Endothelial cell of umbilical vein (primary cell): ENCODE measurements at regions of chr11 and their contacts with region 1.

Region 1: DNA sequence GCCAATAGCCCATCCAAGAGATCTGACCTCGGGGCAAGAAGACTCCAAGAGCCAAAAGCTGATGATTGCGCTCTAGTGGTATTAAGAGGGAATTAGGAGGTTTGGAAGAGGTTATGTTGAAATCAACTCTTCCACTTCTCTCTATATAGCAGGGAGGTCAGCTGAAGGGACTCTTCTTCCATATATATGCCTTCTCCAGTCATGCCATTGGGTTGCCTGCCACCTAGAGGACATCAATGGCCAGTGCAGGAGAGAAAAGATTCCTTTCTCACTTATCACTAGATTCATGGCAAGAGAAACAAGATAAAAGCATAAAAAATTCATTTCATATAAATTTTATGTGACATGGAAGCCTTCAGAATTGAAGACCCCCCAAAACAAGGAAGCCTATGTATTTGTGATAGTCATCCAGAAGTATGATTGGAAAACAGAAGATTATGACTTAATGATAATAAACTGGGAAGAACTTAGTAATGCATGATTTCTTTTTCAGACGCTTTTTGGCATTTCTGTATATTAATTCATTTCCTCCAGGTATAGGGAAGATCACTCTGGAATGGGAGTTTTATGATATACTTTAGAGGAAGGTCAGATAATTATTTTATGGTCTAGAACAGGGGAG is 435.1 kb upstream of the DDI1 start:
- DNase-seq: peak; percentile 78
- H3K4me3 ChIP-seq: no peak overlapping the region
- H3K27ac ChIP-seq: peak overlapping the region; percentile 58
- H3K4me1 ChIP-seq: peaks cover 12% of the 10 kb centered on the region
- H3K27me3 ChIP-seq: no peaks in the 10 kb centered on the region
- CTCF ChIP-seq: peak; percentile 80 to 89
- POLR2A ChIP-seq: no peak

Region 2: GRCh38 chr11:102831489-102832440 is 769.6 kb before region 1 on chr11:
- CTCF ChIA-PET with region 1: no interaction called
- POLR2A ChIA-PET with region 1: no interaction called
- dilution Hi-C with region 1: no loop called
- intact Hi-C with region 1: loop called (anchors 1 kb)
- DNase-seq: peak; percentile 63
- H3K4me3 ChIP-seq: peak overlapping the region in 2 of 3 experiments; percentile 15 to 40
- H3K27ac ChIP-seq: no peak overlapping the region
- H3K4me1 ChIP-seq: no peaks in the 10 kb centered on the region
- H3K27me3 ChIP-seq: peaks cover 5 to 13% of the 10 kb centered on the region in 2 experiments
- CTCF ChIP-seq: peak; percentile 62 to 71
- POLR2A ChIP-seq: no peak

Region 3: DNA sequence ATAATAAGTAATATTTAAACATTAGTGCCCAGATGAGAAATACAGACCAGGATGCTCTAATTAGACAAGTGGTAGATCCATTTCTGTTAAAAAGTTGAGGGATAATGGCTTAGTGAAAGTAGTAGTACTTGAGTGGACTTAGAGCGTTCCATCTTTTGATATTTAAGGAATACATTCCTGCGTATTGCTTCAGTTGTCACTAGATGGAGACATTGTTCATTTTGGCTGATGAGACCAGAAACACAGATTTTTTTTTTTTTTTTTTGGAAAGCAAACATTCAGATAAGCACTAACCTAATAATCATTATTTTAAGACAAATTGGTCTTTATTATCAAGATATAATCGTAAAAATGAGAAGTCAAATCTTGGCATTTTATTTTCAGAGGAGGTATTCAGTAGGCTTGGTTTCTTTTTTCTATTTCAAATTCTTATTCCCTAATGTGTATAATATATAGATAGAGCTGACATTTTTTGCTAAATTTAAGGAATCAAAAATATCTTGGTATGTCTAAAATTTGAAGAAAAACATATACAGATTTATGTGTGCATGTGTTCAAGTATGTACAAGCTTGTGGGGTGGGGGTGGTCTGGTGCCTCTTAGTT is 399.2 kb before region 1 on chr11:
- CTCF ChIA-PET with region 1: interaction called, 16 read pairs
- POLR2A ChIA-PET with region 1: no interaction called
- dilution Hi-C with region 1: no loop called
- intact Hi-C with region 1: loop called (anchors 1 kb)
- DNase-seq: peak; percentile 56
- H3K4me3 ChIP-seq: no peak overlapping the region
- H3K27ac ChIP-seq: no peak overlapping the region
- H3K4me1 ChIP-seq: no peaks in the 10 kb centered on the region
- H3K27me3 ChIP-seq: no peaks in the 10 kb centered on the region
- CTCF ChIP-seq: peak; percentile 42 to 50
- POLR2A ChIP-seq: no peak

Region 4: GRCh38 chr11:103326070-103326794 is 275.1 kb before region 1 on chr11:
- CTCF ChIA-PET with region 1: interaction called, 35 read pairs
- POLR2A ChIA-PET with region 1: no interaction called
- dilution Hi-C with region 1: no loop called
- intact Hi-C with region 1: loop called (anchors 1 kb)
- DNase-seq: peak; percentile 77
- H3K4me3 ChIP-seq: no peak overlapping the region
- H3K27ac ChIP-seq: no peak overlapping the region
- H3K4me1 ChIP-seq: peaks cover 8% of the 10 kb centered on the region
- H3K27me3 ChIP-seq: no peaks in the 10 kb centered on the region
- CTCF ChIP-seq: peak; percentile 67 to 74
- POLR2A ChIP-seq: no peak

Region 5: DNA sequence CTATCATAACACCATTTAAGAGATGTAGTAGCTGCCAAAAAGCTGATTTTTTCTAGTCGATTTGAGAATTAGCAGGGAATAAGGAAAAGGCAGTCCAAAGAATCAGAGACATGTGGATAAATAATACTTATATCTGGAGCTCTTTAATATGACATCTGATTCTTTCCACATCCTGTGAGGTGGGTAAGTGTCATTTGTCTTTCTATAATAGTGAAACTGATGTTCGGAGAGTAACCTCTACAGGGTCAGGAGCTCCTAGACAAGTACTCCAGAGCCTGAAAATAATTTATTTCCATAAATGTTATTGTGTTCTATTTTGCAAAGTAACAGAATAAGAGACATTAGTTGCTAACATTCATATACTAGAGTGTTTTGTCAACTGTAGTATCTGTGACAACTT is 124.5 kb before region 1 on chr11:
- CTCF ChIA-PET with region 1: interaction called, 5 read pairs
- POLR2A ChIA-PET with region 1: no interaction called
- dilution Hi-C with region 1: no loop called
- intact Hi-C with region 1: loop called (anchors 5 kb)
- DNase-seq: no peak
- H3K4me3 ChIP-seq: no peak overlapping the region
- H3K27ac ChIP-seq: no peak overlapping the region
- H3K4me1 ChIP-seq: no peaks in the 10 kb centered on the region
- H3K27me3 ChIP-seq: no peaks in the 10 kb centered on the region
- CTCF ChIP-seq: no peak
- POLR2A ChIP-seq: no peak

Region 6: DNA sequence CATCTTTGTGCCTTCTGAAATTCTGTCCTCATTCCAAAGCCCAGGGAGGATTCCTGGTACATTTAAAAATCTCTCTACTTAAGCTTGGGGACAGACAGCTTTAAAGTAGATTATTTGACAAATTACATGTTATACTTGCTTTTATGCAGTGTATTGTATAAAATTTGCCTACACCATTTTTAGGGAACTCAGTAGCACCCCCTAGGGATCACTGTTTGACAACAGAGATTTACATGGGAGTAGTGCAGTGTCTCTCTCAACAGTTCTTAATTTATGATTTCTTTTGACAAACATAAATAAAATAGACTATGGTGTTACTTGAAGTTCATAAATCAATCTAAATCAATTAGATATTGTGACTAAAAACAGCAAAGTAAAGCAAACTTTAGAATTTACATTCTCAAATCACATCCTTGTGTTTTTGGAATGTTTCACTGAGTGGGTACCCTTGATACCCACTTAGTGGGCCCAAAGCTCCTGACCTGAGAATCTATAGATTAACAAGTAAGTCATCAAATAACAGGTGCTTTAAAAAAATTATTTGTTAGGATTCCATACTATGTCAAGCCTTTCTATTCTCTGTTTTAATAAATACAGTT is 63.3 kb before region 1 on chr11:
- CTCF ChIA-PET with region 1: interaction called, 23 read pairs
- POLR2A ChIA-PET with region 1: no interaction called
- dilution Hi-C with region 1: no loop called
- intact Hi-C with region 1: loop called (anchors 2 kb)
- DNase-seq: peak; percentile 54
- H3K4me3 ChIP-seq: no peak overlapping the region
- H3K27ac ChIP-seq: no peak overlapping the region
- H3K4me1 ChIP-seq: peaks cover 4% of the 10 kb centered on the region
- H3K27me3 ChIP-seq: no peaks in the 10 kb centered on the region
- CTCF ChIP-seq: peak; percentile 45 to 46
- POLR2A ChIP-seq: no peak

Region 7: GRCh38 chr11:103659206-103659618 is 57.9 kb after region 1 on chr11:
- CTCF ChIA-PET with region 1: interaction called, 3 read pairs
- POLR2A ChIA-PET with region 1: no interaction called
- dilution Hi-C with region 1: no loop called
- intact Hi-C with region 1: loop called (anchors 1 kb)
- DNase-seq: peak; percentile 37
- H3K4me3 ChIP-seq: no peak overlapping the region
- H3K27ac ChIP-seq: no peak overlapping the region
- H3K4me1 ChIP-seq: peaks cover 5% of the 10 kb centered on the region
- H3K27me3 ChIP-seq: no peaks in the 10 kb centered on the region
- CTCF ChIP-seq: peak; percentile 30 to 40
- POLR2A ChIP-seq: no peak

Region 8: DNA sequence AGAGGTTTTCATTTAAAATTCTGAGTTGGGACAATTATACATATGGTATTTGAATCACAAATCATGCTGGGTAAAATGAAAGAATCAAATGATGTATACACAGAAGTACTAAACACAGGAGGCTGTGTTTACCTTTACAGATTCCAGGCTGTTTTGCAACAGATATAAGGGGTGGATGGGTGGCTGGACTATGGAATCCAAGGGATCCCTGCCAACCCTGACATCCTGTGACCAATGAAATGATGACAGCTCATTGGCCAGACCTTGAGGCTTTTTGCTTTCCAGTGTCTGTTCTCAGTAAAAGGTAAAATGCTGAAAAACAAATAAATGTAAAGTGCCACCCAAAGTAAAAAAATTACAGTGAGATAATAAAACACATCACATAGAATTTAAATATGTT is 431.8 kb after region 1 on chr11:
- CTCF ChIA-PET with region 1: no interaction called
- POLR2A ChIA-PET with region 1: no interaction called
- dilution Hi-C with region 1: no loop called
- intact Hi-C with region 1: no loop called
- DNase-seq: peak; percentile 9
- H3K4me3 ChIP-seq: no peak overlapping the region
- H3K27ac ChIP-seq: no peak overlapping the region
- H3K4me1 ChIP-seq: no peaks in the 10 kb centered on the region
- H3K27me3 ChIP-seq: no peaks in the 10 kb centered on the region
- CTCF ChIP-seq: no peak
- POLR2A ChIP-seq: no peak